Right lobe of liver (tissue), 6 donors: ENCODE measurements at regions of chr9 and their contacts with region 1.

Region 1: GRCh38 chr9:124222918-124223720 is 34.6 kb upstream of the NEK6 start:
- DNase-seq: peak; percentile 97 to 99 (median 98)
- ATAC-seq: peak; percentile 74 to 82 (median 78)
- H3K4me3 ChIP-seq: peak overlapping the region in 1 of 3 donors; percentile 11
- H3K27ac ChIP-seq: peak overlapping the region; percentile 77 to 91 (median 83)
- H3K4me1 ChIP-seq: peaks cover 0 to 48% (median 25%) of the 10 kb centered on the region in 4 donors
- H3K27me3 ChIP-seq: no peaks in the 10 kb centered on the region
- CTCF ChIP-seq: no peak
- POLR2A ChIP-seq: peak; percentile 27

Region 2: GRCh38 chr9:124270504-124271335 is 47.6 kb after region 1 on chr9:
- intact Hi-C with region 1: loop called (anchors 10 kb)
- DNase-seq: peak; percentile 78 to 88 (median 83)
- ATAC-seq: peak; percentile 73 to 85 (median 82)
- H3K4me3 ChIP-seq: no peak overlapping the region
- H3K27ac ChIP-seq: peak overlapping the region in 2 of 3 donors; percentile 37 to 67
- H3K4me1 ChIP-seq: peaks cover 0 to 59% (median 28%) of the 10 kb centered on the region in 4 donors
- H3K27me3 ChIP-seq: no peaks in the 10 kb centered on the region
- CTCF ChIP-seq: no peak
- POLR2A ChIP-seq: peak; percentile 52

Region 3: DNA sequence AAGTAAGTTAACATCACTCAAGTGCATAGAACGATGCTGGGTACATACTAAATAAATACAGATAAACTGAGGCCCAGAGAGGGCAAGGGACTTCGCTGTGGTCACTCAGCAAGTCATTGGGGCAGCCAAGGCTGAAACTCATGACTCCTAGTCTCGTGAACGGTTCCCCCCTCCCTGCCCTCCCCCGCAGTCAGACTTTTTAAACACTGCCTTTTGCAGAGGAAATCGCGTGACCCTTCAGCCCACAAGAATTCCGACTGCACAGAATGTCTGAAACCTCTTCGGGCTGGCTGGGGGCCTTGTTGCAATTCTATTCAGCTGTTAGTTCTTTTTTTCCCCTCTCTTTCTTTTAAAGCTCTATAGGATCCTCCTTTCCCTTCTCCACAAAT is 62.8 kb after region 1 on chr9:
- intact Hi-C with region 1: no loop called
- DNase-seq: peak; percentile 66 to 75 (median 75)
- ATAC-seq: peak; percentile 7 to 20 (median 14)
- H3K4me3 ChIP-seq: peak overlapping the region in 2 of 3 donors; percentile 8 to 9
- H3K27ac ChIP-seq: peak overlapping the region; percentile 79 to 90 (median 87)
- H3K4me1 ChIP-seq: peaks cover 3 to 84% (median 49%) of the 10 kb centered on the region in 4 donors
- H3K27me3 ChIP-seq: no peaks in the 10 kb centered on the region
- CTCF ChIP-seq: no peak
- POLR2A ChIP-seq: peak; percentile 8